Activated naive CD4-positive, alpha-beta T cell treated with anti-CD3 and anti-CD28 coated beads for 36 hours (primary cell): ENCODE measurements at regions of chr6 and their contacts with region 1.

Region 1: GRCh38 chr6:49625140-49625539 is 11.5 kb downstream of the RHAG start:
- DNase-seq: no peak
- H3K4me3 Mint-ChIP-seq: no peak overlapping the region
- H3K27ac Mint-ChIP-seq: no peak overlapping the region
- H3K4me1 Mint-ChIP-seq: no peaks in the 10 kb centered on the region
- H3K27me3 Mint-ChIP-seq: peaks cover 1% of the 10 kb centered on the region

Region 2: DNA sequence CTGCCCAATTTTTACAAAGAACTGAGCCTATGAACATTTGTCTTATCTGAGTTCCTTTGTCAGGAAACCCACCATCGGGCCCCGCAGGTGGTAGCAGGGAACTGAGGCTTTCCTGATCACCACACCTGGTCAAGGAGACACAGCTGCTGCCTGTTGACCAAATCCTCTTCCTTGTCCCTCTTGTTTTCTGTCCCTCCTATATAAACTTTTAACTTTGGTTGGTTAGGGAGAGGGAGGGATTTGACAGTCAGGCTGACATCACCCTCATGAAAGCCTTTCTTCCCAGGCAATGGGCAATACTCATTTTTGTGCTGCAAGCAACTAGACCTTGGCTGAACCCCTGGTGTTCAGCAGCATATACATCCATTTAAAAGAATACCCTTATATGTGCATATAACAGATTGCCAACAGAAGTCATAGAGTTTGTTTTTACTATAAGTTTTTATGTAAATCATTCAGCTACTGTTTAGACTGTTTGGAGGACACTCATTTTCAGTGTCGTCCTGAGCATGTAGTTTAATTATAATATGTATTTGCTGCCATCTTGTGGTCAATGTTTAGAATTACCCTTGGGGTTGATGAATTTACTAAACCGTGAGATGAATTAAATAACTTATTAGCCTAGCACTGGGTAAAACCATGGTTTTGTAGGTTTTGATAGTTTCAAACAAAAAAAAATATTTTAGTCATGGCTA is 224.2 kb after region 1 on chr6:
- CTCF ChIA-PET with region 1: interaction called, 10 read pairs
- intact Hi-C with region 1: loop called (anchors 1 kb)
- DNase-seq: no peak
- H3K4me3 Mint-ChIP-seq: no peak overlapping the region
- H3K27ac Mint-ChIP-seq: no peak overlapping the region
- H3K4me1 Mint-ChIP-seq: no peaks in the 10 kb centered on the region
- H3K27me3 Mint-ChIP-seq: peaks cover 2% of the 10 kb centered on the region

Region 3: DNA sequence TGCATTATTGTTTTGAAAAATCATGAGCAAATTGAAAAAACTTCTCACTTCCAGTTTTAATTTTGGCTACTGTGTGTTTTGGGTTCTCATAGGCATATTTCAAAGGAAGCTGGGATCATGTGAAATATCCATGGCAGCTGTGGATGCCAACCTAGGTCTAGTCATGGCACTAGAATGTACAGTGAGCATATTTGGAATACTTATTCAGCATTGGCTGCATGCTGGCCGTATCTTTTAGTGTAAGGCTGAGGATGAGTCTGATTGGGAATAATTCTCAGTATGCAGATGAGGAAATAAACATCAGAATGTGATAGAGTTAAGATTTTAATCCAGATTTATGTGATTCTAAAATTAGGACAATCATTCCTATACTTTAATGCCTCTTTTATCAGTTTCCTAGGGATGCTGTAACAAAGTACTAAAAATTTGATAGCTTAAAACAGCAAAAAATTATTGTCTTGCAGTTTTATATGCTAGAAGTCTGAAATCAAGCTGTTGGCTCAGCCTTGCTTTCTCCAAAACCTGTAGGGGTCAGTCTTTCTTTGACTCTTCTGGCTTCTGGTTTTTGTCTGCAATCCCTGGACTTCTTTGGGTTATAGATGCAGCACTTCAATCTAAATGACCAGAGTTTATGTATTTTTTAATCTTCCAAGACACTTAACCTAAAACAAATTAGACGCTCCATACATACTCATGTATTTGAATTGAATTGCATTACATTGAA is 462.3 kb after region 1 on chr6:
- CTCF ChIA-PET with region 1: no interaction called
- intact Hi-C with region 1: no loop called
- DNase-seq: no peak
- H3K4me3 Mint-ChIP-seq: no peak overlapping the region
- H3K27ac Mint-ChIP-seq: no peak overlapping the region
- H3K4me1 Mint-ChIP-seq: no peaks in the 10 kb centered on the region
- H3K27me3 Mint-ChIP-seq: no peaks in the 10 kb centered on the region